HAP-1 (cell line): ENCODE measurements at regions of chr3 and their contacts with region 1.

Region 1: DNA sequence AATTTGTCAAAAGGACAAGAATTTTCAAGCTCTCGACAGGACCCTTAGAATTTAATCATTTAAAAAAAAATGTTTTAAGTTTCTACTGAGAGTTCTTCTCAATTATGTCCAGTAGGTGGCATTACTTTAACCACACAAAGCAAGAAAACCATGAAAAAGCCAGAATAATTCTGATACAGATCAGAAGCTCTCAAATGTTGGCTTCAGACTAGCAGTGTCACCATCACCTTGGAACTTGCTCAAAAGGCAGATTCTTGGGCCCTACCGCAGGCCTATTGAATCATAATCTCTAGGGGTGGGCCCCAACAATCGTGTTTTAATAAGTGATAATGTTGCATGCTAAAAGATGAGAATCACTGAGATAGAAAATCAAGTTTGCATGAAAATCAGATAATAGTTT is 99.5 kb upstream of the KCNMB2 start:
- DNase-seq: peak in 1 of 2 experiments; percentile 70
- H3K4me3 ChIP-seq: no peak overlapping the region
- H3K4me1 ChIP-seq: peaks cover 25% of the 10 kb centered on the region
- H3K27me3 ChIP-seq: no peaks in the 10 kb centered on the region

Region 2: GRCh38 chr3:178059119-178059518 is 377.7 kb before region 1 on chr3:
- in situ Hi-C with region 1: no loop called
- DNase-seq: no peak
- H3K4me3 ChIP-seq: no peak overlapping the region
- H3K4me1 ChIP-seq: no peaks in the 10 kb centered on the region
- H3K27me3 ChIP-seq: no peaks in the 10 kb centered on the region; the same call in 1 of the 2 replicates

Region 3: GRCh38 chr3:178966299-178967176 is 529.8 kb after region 1 on chr3:
- in situ Hi-C with region 1: loop called (anchors 25 kb)
- DNase-seq: peak in 1 of 2 experiments; percentile 61
- H3K4me3 ChIP-seq: no peak overlapping the region
- H3K4me1 ChIP-seq: peaks cover 3% of the 10 kb centered on the region
- H3K27me3 ChIP-seq: no peaks in the 10 kb centered on the region